ENCODE measurements at regions of chr10 and their contacts with region 1.

Region 1: DNA sequence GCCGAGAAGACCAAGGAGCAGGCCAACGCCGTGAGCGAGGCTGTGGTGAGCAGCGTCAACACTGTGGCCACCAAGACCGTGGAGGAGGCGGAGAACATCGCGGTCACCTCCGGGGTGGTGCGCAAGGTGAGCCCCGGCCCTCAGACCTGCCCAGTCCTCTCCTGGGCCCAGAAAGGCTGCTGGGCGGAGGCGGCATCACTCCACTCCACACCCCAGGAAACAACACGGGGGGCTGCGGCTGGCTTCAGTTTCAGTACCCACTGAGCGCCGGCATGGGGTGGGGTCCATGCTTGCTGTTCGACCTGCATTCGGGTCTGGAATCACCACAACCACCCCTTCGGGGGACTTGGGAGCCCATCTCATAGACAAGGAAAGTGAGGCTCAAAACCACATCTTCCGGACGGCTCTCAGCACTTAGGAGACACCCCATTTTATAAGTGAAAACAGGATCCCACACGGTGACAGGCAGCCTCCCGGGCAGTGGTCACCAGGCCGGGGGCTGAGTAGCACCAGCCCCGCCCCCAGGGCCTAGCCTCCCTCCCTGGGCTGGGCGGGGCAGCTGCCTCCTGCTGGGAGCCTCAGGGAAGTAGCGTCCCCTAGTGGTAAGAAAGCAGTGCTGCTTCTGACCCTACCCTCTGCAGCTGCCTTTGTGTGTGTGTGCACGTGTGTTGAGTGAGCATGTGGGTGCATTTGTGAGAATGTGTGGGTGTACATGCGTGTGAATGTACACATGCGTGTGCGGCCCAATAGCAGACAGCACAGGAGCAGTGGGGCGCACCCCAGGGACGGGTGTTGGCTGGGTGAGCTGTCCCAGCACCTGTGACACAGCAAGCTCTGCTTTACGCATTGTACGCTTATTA is 1.8 kb downstream of the SNCG start:
- DNase-seq: peak; percentile 62
- H3K4me3 Mint-ChIP-seq: no peak overlapping the region
- H3K27ac Mint-ChIP-seq: no peak overlapping the region
- H3K4me1 Mint-ChIP-seq: no peaks in the 10 kb centered on the region
- H3K27me3 Mint-ChIP-seq: no peaks in the 10 kb centered on the region

Region 2: GRCh38 chr10:86688398-86688921 is 271.8 kb before region 1 on chr10:
- CTCF ChIA-PET with region 1: interaction called, 5 read pairs
- POLR2A ChIA-PET with region 1: no interaction called
- intact Hi-C with region 1: loop called (anchors 10 kb)
- DNase-seq: peak; percentile 71
- H3K4me3 Mint-ChIP-seq: no peak overlapping the region
- H3K27ac Mint-ChIP-seq: no peak overlapping the region
- H3K4me1 Mint-ChIP-seq: no peaks in the 10 kb centered on the region
- H3K27me3 Mint-ChIP-seq: peaks cover 2% of the 10 kb centered on the region

Region 3: GRCh38 chr10:86710987-86711512 is 249.2 kb before region 1 on chr10:
- CTCF ChIA-PET with region 1: no interaction called
- POLR2A ChIA-PET with region 1: no interaction called
- intact Hi-C with region 1: loop called (anchors 2 kb)
- DNase-seq: peak; percentile 89
- H3K4me3 Mint-ChIP-seq: peak overlapping the region; percentile 75
- H3K27ac Mint-ChIP-seq: peak overlapping the region; percentile 89
- H3K4me1 Mint-ChIP-seq: peaks cover 11% of the 10 kb centered on the region
- H3K27me3 Mint-ChIP-seq: no peaks in the 10 kb centered on the region

Region 4: GRCh38 chr10:86936661-86937501 is 23.4 kb before region 1 on chr10:
- CTCF ChIA-PET with region 1: interaction called, 47 read pairs
- POLR2A ChIA-PET with region 1: interaction called, 9 read pairs
- intact Hi-C with region 1: no loop called
- DNase-seq: no peak
- H3K4me3 Mint-ChIP-seq: no peak overlapping the region
- H3K27ac Mint-ChIP-seq: no peak overlapping the region
- H3K4me1 Mint-ChIP-seq: peaks cover 1% of the 10 kb centered on the region
- H3K27me3 Mint-ChIP-seq: no peaks in the 10 kb centered on the region

Region 5: GRCh38 chr10:86971232-86971991 is 11.2 kb after region 1 on chr10:
- CTCF ChIA-PET with region 1: interaction called, 16 read pairs
- POLR2A ChIA-PET with region 1: no interaction called
- intact Hi-C with region 1: no loop called
- DNase-seq: peak; percentile 89
- H3K4me3 Mint-ChIP-seq: peak overlapping the region; percentile 71
- H3K27ac Mint-ChIP-seq: peak overlapping the region; percentile 58
- H3K4me1 Mint-ChIP-seq: peaks cover 22% of the 10 kb centered on the region
- H3K27me3 Mint-ChIP-seq: peaks cover 2% of the 10 kb centered on the region

Region 6: GRCh38 chr10:87105446-87106124 is 145.4 kb after region 1 on chr10:
- CTCF ChIA-PET with region 1: no interaction called
- POLR2A ChIA-PET with region 1: no interaction called
- intact Hi-C with region 1: no loop called
- DNase-seq: no peak
- H3K4me3 Mint-ChIP-seq: no peak overlapping the region
- H3K27ac Mint-ChIP-seq: no peak overlapping the region
- H3K4me1 Mint-ChIP-seq: peaks cover 5% of the 10 kb centered on the region
- H3K27me3 Mint-ChIP-seq: no peaks in the 10 kb centered on the region

Measured in activated CD4-positive, alpha-beta memory T cell treated with anti-CD3 and anti-CD28 coated beads for 36 hours (primary cell).